IMR-90 (cell line): ENCODE measurements at regions of chr1 and their contacts with region 1.

Region 1: DNA sequence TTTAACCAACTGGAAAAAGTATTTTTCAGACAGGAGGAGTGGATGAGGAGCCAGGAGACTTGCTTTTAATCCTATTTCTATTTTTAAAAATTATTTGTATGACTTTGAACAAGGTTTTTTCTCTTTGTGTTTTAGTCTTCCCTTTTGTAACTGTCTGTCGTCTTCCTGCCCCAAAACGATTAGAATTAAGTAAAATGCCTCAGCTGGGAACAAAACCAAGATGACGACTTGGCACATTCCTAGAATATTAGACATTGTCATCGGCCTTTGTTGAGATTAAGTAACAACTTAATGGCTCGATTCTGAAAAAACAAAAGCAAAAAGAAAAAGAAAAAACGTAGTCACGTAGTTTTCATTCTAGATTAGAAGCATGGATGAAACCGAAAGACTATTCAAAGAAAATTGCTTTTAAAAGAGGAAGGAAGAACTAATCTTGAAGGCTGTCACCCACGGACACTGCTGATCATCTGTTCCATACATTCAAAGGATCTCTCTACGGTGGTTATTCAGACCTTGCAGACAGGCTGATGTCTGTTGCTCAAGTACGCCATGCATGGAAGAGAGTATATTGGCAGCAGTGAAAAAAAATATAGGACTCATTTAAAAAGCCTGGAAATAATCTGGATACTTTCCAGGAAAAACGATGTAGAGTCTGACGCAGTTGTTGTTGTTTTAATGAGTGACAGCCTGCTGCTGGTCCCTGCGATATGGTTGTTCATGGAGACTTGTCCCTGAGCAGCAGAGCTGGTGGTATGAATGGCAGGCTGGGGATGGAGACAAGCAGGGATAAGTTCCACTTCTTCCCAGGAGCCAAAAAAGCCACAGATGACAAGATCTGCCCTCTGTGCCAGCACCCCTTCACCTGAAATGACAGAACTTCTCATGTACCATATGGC is 16.8 kb downstream of the GNG4 start:
- DNase-seq: peak; percentile 56
- ATAC-seq: peak; percentile 62
- H3K4me3 ChIP-seq: peak overlapping the region; percentile 49
- H3K27ac ChIP-seq: no peak overlapping the region
- H3K4me1 ChIP-seq: peaks cover 9% of the 10 kb centered on the region
- H3K27me3 ChIP-seq: 0 out of 2 replicates have a peak, but pooled peaks cover 4% of the 10 kb centered on the region
- CTCF ChIP-seq: no peak
- POLR2A ChIP-seq: no peak
- RAD21 ChIP-seq: no peak

Region 2: GRCh38 chr1:234326497-234327366 is 1306.0 kb before region 1 on chr1:
- CTCF ChIA-PET with region 1: no interaction called
- POLR2A ChIA-PET with region 1: no interaction called
- dilution Hi-C with region 1: no loop called
- in situ Hi-C with region 1: no loop called
- intact Hi-C with region 1: loop called (anchors 5 kb)
- DNase-seq: peak; percentile 43
- ATAC-seq: peak; percentile 92
- H3K4me3 ChIP-seq: peak overlapping the region; percentile 40; the same call in 1 of the 2 replicates
- H3K27ac ChIP-seq: no peak overlapping the region
- H3K4me1 ChIP-seq: peaks cover 3% of the 10 kb centered on the region
- H3K27me3 ChIP-seq: peaks cover 4% of the 10 kb centered on the region
- CTCF ChIP-seq: peak; percentile 72
- POLR2A ChIP-seq: no peak
- RAD21 ChIP-seq: peak; percentile 59

Region 3: DNA sequence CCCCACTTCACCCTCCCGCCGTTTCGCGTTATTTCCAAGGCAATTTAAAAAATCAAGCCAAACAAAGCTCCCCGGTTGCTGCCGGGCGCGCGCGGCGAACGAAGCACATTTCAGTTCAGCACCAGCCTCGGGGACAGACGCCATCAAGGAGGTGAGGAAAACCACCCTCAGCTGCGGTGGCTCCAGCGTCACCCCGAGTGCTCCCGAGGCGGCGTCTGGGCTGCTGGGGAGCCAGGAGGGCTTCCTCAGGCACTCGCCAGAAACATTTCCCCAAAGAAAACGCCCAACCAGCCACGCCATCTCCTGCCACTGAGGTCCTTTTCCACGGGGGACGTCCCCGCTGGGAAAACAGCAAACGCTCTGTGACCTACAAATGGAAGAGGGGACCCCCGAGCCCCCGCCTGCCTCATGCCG is 16.2 kb after region 1 on chr1:
- CTCF ChIA-PET with region 1: no interaction called
- POLR2A ChIA-PET with region 1: no interaction called
- dilution Hi-C with region 1: no loop called
- in situ Hi-C with region 1: no loop called
- intact Hi-C with region 1: loop called (anchors 2 kb)
- DNase-seq: peak; percentile 67
- ATAC-seq: peak; percentile 87
- H3K4me3 ChIP-seq: no peak overlapping the region
- H3K27ac ChIP-seq: no peak overlapping the region
- H3K4me1 ChIP-seq: no peaks in the 10 kb centered on the region
- H3K27me3 ChIP-seq: peaks cover 36% of the 10 kb centered on the region
- CTCF ChIP-seq: no peak
- POLR2A ChIP-seq: no peak
- RAD21 ChIP-seq: 0 out of 2 replicates have a peak, but pooled peaks have one; percentile 13